Left ventricle myocardium inferior (tissue), 1 donor: ENCODE measurements at regions of chr13 and their contacts with region 1.

Region 1: DNA sequence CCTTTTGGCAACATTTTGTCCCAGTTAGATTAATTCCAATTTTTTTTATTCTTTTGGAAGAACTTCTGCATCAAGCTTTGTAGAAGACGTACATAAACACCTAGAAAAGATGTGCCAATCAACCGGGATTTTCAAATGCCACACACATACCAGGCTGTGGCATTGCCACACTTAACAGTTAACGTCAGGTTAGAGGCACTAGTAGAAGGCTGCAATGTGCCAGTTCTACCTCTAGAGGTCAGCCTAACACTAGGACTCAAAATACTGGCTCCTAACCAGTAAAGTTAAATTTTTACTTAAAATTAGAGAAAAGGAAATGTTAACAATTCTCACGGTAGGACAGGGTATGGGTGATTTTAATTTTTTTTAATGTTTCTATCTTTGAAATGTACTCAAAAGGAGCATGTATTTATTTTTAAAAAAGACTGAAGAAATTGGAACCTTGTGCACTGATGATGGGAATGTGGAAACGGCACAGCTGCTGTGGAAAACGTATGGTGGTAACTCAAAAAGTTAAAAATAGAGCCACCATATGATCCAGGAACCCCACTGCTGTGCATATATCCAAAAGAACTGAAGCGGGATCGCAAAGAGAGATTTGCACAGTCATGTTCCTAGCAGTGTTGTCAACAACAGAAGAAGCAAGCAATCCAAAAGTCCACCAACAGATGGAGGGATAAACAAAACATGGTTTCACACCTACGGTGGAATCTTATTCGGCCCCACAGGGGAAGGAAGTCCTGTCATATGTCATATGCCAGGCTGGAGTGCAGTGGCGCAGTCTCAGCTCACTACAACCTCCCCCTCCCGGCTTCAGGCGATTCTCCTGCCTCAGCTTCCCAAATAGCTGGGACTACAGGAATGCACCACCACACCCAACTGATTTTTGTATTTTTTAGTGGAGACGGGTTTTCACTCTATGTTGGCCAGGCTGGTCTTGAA is 30.3 kb downstream of the CRYL1 start:
- DNase-seq: no peak
- H3K4me3 ChIP-seq: peak overlapping the region; percentile 37
- H3K27ac ChIP-seq: no peak overlapping the region
- H3K4me1 ChIP-seq: peaks cover 12% of the 10 kb centered on the region
- H3K27me3 ChIP-seq: no peaks in the 10 kb centered on the region
- CTCF ChIP-seq: peak; percentile 98

Region 2: GRCh38 chr13:20924758-20925394 is 429.5 kb after region 1 on chr13:
- intact Hi-C with region 1: loop called (anchors 10 kb)
- DNase-seq: peak; percentile 60
- H3K4me3 ChIP-seq: no peak overlapping the region
- H3K27ac ChIP-seq: no peak overlapping the region
- H3K4me1 ChIP-seq: no peaks in the 10 kb centered on the region
- H3K27me3 ChIP-seq: no peaks in the 10 kb centered on the region
- CTCF ChIP-seq: peak; percentile 82